K562 (cell line): ENCODE measurements at regions of chr4 and their contacts with region 1.

Region 1: DNA sequence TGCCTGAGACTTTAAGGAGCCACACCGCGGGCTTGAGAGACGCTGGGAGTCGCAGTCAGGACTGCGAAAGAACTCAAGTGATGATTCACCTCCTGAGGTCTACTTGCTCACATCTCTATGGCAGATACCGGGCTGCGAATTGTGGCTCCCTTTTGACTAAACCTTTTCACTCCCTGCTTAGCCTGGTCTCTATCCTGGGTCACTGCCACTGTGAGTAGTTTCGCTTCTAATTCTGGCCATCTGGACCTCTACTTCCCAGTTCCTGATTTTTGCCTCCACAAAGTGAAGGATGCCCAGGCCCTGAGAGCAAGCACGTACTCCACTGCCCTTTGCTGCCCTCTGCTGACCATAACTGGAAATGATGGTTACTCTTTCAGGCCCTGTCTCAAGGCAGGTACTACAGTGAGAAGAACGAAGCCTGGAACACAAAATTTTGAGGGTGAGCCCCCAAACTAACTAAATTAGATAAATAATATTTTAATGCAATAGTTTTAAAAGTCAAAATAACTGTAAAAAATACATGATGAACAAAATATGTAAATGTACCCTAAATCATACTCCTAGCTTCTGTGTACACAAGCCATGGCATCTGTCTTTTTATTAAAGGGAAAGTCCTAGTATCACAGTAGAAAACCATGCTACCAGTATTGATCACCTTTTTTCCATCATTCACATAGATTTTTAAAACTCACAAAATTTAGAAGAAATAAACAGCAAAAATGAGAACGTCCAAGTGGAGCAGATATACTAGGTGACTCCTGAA is 16.7 kb downstream of the MAD2L1 start:
- DNase-seq: peak; percentile 59 to 81 (median 66)
- ATAC-seq: peak; percentile 95
- H3K4me3 ChIP-seq: no peak overlapping the region
- H3K27ac ChIP-seq: no peak overlapping the region
- H3K4me1 ChIP-seq: no peaks in the 10 kb centered on the region; a peak in 1 of 5 replicates
- H3K27me3 ChIP-seq: no peaks in the 10 kb centered on the region
- CTCF ChIP-seq: peak; percentile 71 to 81 (median 79)
- EP300 ChIP-seq: no peak
- POLR2A ChIP-seq: no peak
- RAD21 ChIP-seq: peak; percentile 71 to 78

Region 2: DNA sequence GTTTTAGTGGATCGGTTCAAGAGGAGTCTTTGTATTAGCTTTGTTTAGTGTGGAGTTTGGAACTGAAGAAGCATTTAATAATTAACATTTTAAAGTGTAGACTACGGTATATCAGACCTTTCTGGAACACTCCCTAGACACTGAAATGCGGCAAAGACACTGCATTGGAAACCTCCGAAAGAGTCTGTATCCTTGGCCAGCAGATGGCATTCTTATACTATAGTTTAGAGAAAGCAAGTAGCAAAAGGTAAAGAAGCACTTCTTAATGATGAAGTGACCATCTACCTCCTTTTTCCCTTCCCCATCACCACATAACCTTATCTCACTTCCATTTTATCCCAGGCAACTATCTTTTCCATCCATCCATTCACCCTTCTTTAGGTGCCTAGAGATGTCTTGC is 735.6 kb before region 1 on chr4:
- CTCF ChIA-PET with region 1: interaction called, 3 read pairs
- POLR2A ChIA-PET with region 1: no interaction called
- in situ Hi-C with region 1: loop called (anchors 10 kb)
- intact Hi-C with region 1: loop called (anchors 2 kb)
- DNase-seq: peak in 1 of 4 experiments; percentile 44
- ATAC-seq: peak; percentile 83
- H3K4me3 ChIP-seq: no peak overlapping the region
- H3K27ac ChIP-seq: no peak overlapping the region
- H3K4me1 ChIP-seq: no peaks in the 10 kb centered on the region
- H3K27me3 ChIP-seq: peaks cover 0 to 5% of the 10 kb centered on the region in 2 experiments; a peak in 1 of 5 replicates
- CTCF ChIP-seq: peak; percentile 27 to 63 (median 44); a peak in 5 of 6 replicates
- EP300 ChIP-seq: no peak
- POLR2A ChIP-seq: no peak
- RAD21 ChIP-seq: peak; percentile 71 to 73

Region 3: DNA sequence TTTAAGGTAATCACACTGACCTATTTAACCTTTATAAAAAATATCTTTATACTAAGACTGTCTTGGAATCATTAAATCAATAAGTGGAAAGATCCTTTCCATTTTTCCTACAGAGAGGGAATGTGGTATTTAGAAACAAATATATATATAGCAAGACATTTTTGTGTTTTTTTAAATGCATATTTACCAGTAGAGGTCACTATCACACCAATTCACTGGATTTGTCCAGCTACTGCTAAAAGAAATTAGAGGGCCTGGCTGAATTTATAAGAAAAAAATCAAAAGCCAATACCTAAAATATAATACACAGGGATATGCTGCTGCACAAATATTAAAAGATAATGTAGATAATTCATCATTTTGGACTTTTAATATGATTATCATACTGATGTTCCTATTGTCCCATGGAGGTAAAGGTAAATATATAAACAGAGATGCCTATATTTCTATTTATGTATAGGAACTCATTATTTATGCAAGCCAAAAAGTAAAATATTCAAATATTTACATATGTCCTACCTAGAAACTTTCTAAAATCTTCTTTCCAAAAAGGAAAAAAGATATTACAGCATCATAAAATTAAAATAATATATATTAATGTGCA is 490.8 kb before region 1 on chr4:
- CTCF ChIA-PET with region 1: no interaction called
- POLR2A ChIA-PET with region 1: no interaction called
- in situ Hi-C with region 1: no loop called
- intact Hi-C with region 1: loop called (anchors 1 kb)
- DNase-seq: peak in 3 of 4 experiments; percentile 7 to 28 (median 12)
- ATAC-seq: peak; percentile 75
- H3K4me3 ChIP-seq: no peak overlapping the region
- H3K27ac ChIP-seq: no peak overlapping the region
- H3K4me1 ChIP-seq: peaks cover 0 to 3% of the 10 kb centered on the region in 2 experiments; a peak in 1 of 5 replicates
- H3K27me3 ChIP-seq: no peaks in the 10 kb centered on the region
- CTCF ChIP-seq: peak in 1 of 3 experiments; percentile 64; a peak in 2 of 6 replicates
- EP300 ChIP-seq: no peak
- POLR2A ChIP-seq: no peak
- RAD21 ChIP-seq: peak; percentile 28 to 46; a peak in 2 of 4 replicates

Region 4: DNA sequence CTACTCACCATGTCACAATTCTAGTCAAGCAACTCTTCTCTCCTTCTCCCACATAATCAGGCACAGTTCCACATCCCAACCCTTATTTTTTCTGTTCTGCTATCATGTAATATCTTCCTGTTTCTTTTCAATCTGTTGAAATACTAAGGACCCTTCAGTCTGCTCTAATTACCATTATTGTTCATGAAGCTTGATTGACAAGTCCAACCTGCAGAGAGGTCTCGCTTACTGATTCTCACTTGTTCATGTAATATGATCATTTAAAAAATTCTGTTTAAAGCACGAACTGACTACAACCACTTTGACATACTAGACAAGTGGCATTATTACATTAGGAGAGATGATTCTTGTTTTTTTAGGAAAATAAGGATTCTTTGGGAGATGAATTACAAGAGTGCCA is 125.4 kb after region 1 on chr4:
- CTCF ChIA-PET with region 1: no interaction called
- POLR2A ChIA-PET with region 1: no interaction called
- in situ Hi-C with region 1: no loop called
- intact Hi-C with region 1: no loop called
- DNase-seq: no peak
- ATAC-seq: no peak
- H3K4me3 ChIP-seq: no peak overlapping the region
- H3K27ac ChIP-seq: no peak overlapping the region
- H3K4me1 ChIP-seq: no peaks in the 10 kb centered on the region
- H3K27me3 ChIP-seq: no peaks in the 10 kb centered on the region
- CTCF ChIP-seq: no peak
- EP300 ChIP-seq: no peak
- POLR2A ChIP-seq: no peak
- RAD21 ChIP-seq: no peak